ENCODE measurements at regions of chr19 and their contacts with region 1.

Region 1: DNA sequence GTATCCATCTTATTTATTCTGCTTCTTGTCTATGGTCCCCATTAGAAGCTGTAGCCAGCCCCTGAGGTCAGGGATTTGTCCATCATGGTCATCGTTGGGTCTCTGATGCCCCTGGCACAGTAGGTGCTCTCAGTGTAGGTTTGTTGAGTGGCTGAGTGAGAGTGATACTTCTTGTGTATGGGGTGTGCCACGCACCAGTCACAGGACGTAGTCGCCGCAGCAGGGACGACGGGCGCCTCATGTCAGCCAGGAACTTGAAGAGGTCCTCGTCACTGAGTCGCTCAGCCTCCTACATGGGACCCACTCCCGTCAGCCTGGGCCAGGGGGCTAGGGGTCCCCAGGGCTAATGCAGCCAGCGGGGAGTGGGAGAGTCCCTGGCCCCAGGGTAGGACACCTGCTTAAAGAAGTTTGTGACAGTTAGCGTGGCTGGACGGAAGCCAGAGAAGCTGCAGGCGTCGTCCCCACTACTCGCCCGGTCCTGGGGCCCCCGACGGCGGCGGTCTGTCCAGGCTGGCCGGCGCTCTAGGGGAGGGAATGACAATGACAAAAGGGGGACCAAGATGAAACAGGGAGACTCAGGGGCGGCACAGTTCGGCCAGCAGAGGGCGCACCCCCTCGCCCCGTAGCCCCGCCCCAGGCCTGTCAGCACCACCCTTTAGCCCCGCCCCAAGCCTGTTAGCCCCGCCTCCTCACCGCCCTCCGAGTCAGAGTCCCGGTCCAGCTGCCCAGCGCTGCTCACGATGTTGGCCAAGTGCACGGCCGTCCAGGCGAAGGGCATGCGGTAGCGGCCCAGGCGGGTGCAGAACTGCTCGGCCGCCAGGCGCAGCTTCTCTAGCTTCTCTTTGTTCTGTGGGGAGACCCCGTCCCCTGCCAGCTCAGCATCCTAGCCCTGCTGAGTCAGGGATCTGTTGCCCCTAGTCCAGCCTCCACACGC is 3.7 kb downstream of the ANGPTL8 start:
- DNase-seq: peak; percentile 65
- H3K4me3 ChIP-seq: peak overlapping the region; percentile 10; the same call in 1 of the 2 replicates
- H3K27ac ChIP-seq: no peak overlapping the region
- H3K27me3 ChIP-seq: no peaks in the 10 kb centered on the region
- CTCF ChIP-seq: peak; percentile 67

Region 2: GRCh38 chr19:11041966-11042627 is 201.0 kb before region 1 on chr19:
- CTCF ChIA-PET with region 1: no interaction called
- POLR2A ChIA-PET with region 1: no interaction called
- DNase-seq: no peak
- H3K4me3 ChIP-seq: no peak overlapping the region
- H3K27ac ChIP-seq: no peak overlapping the region
- H3K27me3 ChIP-seq: no peaks in the 10 kb centered on the region
- CTCF ChIP-seq: no peak

Region 3: GRCh38 chr19:11286312-11286974 is 43.3 kb after region 1 on chr19:
- CTCF ChIA-PET with region 1: interaction called, 12 read pairs
- POLR2A ChIA-PET with region 1: no interaction called
- DNase-seq: peak; percentile 11
- H3K4me3 ChIP-seq: no peak overlapping the region
- H3K27ac ChIP-seq: no peak overlapping the region
- H3K27me3 ChIP-seq: no peaks in the 10 kb centered on the region
- CTCF ChIP-seq: peak; percentile 21; the same call in 1 of the 2 replicates

Region 4: DNA sequence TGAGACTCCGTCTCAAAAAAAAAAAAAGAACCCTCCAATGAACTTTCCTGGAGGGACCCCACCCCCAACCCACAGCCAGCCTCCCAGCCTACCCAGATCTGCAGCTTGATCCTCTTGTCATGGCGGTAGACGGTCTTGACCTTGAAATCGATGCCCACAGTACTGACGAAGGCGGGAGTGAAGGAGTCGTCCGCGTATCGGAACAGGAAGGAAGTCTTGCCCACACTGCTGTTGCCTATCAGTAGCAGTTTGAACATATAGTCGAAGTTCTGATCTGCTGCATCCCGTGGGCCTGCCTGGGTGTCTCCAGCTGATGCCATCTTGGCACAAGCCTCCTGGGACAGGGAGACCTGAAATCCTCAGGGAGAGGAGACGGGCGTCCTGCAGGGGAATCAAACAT is 93.9 kb after region 1 on chr19:
- CTCF ChIA-PET with region 1: no interaction called
- POLR2A ChIA-PET with region 1: no interaction called
- DNase-seq: no peak
- H3K4me3 ChIP-seq: no peak overlapping the region
- H3K27ac ChIP-seq: no peak overlapping the region
- H3K27me3 ChIP-seq: no peaks in the 10 kb centered on the region
- CTCF ChIP-seq: no peak

Region 5: DNA sequence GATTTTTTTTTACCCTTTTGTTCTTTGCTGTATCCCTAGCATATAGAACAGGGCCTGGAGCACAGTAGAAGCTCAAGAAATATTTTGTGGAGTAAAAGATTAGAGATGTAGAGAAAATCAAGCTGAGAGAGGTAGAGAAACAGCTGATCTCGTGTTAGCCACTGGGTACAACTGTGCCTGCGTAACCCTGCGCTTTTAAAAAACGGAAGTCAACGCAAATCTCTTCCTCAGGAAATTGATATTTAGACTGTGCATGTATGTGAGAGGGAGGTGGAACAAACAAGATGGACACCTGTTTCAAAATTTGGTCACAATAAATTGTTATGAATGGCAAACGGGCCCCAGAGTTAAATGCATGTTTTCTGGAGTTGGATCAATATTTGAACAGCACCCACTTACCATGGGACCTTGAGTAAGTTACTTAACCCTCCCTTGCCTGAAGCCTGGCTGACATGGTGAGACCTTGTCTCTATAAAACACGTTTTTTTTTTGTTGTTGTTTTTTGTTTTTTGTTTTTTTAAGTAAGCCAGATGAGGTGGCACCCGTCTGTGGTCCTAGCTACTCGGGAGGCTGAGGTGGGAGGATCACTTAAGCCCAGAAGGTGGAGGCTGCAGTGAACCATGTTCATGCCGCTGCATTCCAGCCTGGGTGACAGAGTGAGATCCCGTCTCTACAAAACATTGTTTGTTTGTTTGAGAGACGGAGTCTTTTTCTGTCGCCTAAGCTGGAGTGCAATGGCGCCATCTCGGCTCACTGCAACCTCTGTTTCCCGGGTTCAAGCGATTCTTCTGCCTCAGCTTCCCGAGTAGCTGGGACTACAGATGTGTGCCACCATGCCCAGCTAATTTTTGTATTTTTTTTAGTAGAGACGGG is 144.3 kb after region 1 on chr19:
- CTCF ChIA-PET with region 1: interaction called, 11 read pairs
- POLR2A ChIA-PET with region 1: no interaction called
- DNase-seq: no peak
- H3K4me3 ChIP-seq: no peak overlapping the region
- H3K27ac ChIP-seq: no peak overlapping the region
- H3K27me3 ChIP-seq: peaks cover 3% of the 10 kb centered on the region
- CTCF ChIP-seq: no peak

Measured in AG04450 (cell line).